ENCODE measurements at regions of chr1 and their contacts with region 1.

Region 1: GRCh38 chr1:169741666-169742394 is 8.0 kb upstream of the SELE start:
- DNase-seq: no peak
- H3K4me3 ChIP-seq: no peak overlapping the region
- H3K27ac ChIP-seq: no peak overlapping the region
- H3K4me1 ChIP-seq: peaks cover 26% of the 10 kb centered on the region
- H3K27me3 ChIP-seq: no peaks in the 10 kb centered on the region
- CTCF ChIP-seq: no peak
- POLR2A ChIP-seq: no peak

Region 2: GRCh38 chr1:169779980-169780379 is 38.1 kb after region 1 on chr1:
- CTCF ChIA-PET with region 1: no interaction called
- POLR2A ChIA-PET with region 1: no interaction called
- dilution Hi-C with region 1: no loop called
- intact Hi-C with region 1: loop called (anchors 2 kb)
- DNase-seq: peak; percentile 94
- H3K4me3 ChIP-seq: no peak overlapping the region
- H3K27ac ChIP-seq: peak overlapping the region; percentile 81
- H3K4me1 ChIP-seq: peaks cover 35% of the 10 kb centered on the region
- H3K27me3 ChIP-seq: peaks cover under 1 to 5% of the 10 kb centered on the region in 2 experiments
- CTCF ChIP-seq: no peak
- POLR2A ChIP-seq: no peak